ENCODE measurements at regions of chr2 and their contacts with region 1.

Region 1: GRCh38 chr2:238288650-238289573 is 502 bp upstream of the PER2 start:
- DNase-seq: peak; percentile 96 to 99 (median 98)
- ATAC-seq: peak; percentile 93
- H3K4me3 ChIP-seq: peak overlapping the region; percentile 73
- H3K4me3 Mint-ChIP-seq: peak overlapping the region; percentile 84 to 97 (median 93)
- H3K27ac ChIP-seq: peak overlapping the region; percentile 80
- H3K27ac Mint-ChIP-seq: peak overlapping the region; percentile 93 to 98 (median 97)
- H3K4me1 ChIP-seq: peaks cover 16 to 23% of the 10 kb centered on the region in 2 donors
- H3K4me1 Mint-ChIP-seq: peaks cover 26 to 56% (median 40%) of the 10 kb centered on the region in 7 donors
- H3K27me3 ChIP-seq: no peaks in the 10 kb centered on the region
- H3K27me3 Mint-ChIP-seq: peaks cover 0 to 2% (median 0%) of the 10 kb centered on the region in 5 donors

Region 2: DNA sequence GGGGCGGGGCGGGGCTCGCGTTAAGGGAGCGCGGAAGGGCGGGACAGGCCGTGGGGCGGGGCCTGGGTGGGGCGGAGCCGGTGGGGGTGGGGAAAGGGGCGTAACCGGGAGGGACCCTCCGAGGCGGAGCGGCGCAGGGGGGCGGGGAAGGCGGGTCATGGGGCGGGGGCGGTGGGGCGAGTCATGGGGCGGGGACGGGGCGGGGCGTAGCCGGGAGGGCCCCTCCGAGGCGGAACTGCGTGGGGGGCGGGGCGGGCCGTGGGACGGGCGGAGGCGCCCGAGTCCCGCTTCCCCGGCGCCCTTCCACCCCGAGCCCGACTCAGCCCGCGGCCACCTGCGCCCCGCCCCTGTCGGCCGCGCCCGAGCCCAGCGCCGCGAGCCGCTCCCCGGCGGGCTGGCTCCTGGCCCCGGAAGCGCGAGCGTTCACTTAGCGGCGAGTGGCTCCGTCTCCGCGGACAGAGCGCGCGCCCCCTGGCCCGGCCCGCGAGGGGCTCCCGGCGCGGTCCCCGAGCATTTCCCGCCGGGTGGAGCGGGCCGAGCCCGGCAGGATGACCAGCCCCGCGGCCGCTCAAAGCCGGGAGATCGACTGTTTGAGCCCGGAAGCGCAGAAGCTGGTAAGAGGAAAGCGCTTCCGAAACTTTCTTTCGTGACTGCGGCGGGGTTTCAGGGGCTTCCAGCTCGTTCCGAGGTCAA is 596.9 kb before region 1 on chr2:
- CTCF ChIA-PET with region 1: no interaction called
- POLR2A ChIA-PET with region 1: no interaction called
- intact Hi-C with region 1: loop called (anchors 5 kb)
- DNase-seq: peak; percentile 84 to 97 (median 90)
- ATAC-seq: peak; percentile 75
- H3K4me3 ChIP-seq: peak overlapping the region; percentile 82
- H3K4me3 Mint-ChIP-seq: peak overlapping the region; percentile 86 to 98 (median 92)
- H3K27ac ChIP-seq: peak overlapping the region; percentile 97
- H3K27ac Mint-ChIP-seq: peak overlapping the region; percentile 89 to 98 (median 94)
- H3K4me1 ChIP-seq: peaks cover 61 to 63% of the 10 kb centered on the region in 2 donors
- H3K4me1 Mint-ChIP-seq: peaks cover 59 to 86% (median 74%) of the 10 kb centered on the region in 7 donors
- H3K27me3 ChIP-seq: no peaks in the 10 kb centered on the region
- H3K27me3 Mint-ChIP-seq: no peaks in the 10 kb centered on the region

Region 3: GRCh38 chr2:238203094-238203972 is 85.6 kb before region 1 on chr2 and contains the start of gene ILKAP:
- CTCF ChIA-PET with region 1: no interaction called
- POLR2A ChIA-PET with region 1: interaction called, 9 read pairs
- intact Hi-C with region 1: loop called (anchors 1 kb)
- DNase-seq: peak; percentile 87 to 95 (median 92)
- ATAC-seq: peak; percentile 98
- H3K4me3 ChIP-seq: peak within 1 kb of the TSS; percentile 67
- H3K4me3 Mint-ChIP-seq: peak within 1 kb of the TSS; percentile 84 to 94 (median 88)
- H3K27ac ChIP-seq: peak within 1 kb of the TSS; percentile 91
- H3K27ac Mint-ChIP-seq: peak within 1 kb of the TSS; percentile 84 to 95 (median 92)
- H3K4me1 ChIP-seq: peaks cover 20 to 35% of the 10 kb centered on the region in 2 donors
- H3K4me1 Mint-ChIP-seq: peaks cover 28 to 55% (median 43%) of the 10 kb centered on the region in 7 donors
- H3K27me3 ChIP-seq: no peaks in the 10 kb centered on the region
- H3K27me3 Mint-ChIP-seq: peaks cover 0 to 4% (median 0%) of the 10 kb centered on the region in 5 donors
- total RNA-seq, gene ILKAP: 68.1 to 126 (median 90.9) TPM

Region 4: DNA sequence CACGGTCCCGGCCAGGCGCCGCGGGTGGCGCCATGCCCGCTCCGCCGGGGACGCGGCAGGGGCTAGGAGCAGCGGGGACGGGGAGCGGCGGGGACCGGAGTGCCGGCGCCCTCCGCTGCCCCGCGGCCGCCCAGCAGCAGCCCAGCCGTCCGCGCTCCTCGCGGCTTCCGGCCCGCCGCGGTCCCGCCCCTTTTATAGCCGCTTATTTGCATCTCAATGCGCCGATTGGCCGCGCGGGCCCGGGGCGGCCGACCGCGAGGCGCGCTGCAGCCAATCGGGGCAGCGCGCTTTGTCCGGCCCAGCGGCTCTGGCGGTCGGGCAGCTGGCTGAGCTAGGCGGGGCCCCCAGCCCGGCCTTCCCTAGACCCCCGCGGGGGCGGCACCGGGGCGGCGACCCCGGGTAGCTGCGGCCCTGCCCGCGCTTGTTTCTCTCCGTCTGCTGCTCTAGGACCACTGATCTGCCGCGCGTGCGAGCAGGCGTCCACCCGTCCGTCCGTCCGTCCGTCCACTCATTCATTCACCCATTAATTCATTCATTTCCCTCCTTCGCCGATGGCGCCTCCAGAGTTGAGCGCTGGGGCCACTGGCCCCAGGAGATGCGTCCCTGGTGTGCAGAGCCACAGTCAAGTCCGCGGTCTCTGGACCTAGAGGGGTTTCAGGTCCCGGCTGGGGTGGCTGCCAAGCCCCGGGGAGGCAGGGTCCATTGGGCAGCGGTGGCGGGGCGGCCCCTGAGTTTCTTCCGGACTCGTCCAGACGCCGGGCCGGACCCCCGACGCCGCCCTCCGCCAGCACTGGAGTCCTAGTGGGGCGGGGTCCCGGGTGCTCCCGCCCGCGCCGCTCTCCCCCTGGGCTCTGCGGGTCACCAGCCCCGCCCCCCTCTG is 48.8 kb before region 1 on chr2 and contains the start of gene HES6:
- CTCF ChIA-PET with region 1: no interaction called
- POLR2A ChIA-PET with region 1: interaction called, 3 read pairs
- intact Hi-C with region 1: loop called in 1 of 2 experiments (anchors 1 kb)
- DNase-seq: peak; percentile 50 to 84 (median 61)
- ATAC-seq: peak; percentile 90
- H3K4me3 ChIP-seq: peak within 1 kb of the TSS; percentile 59
- H3K4me3 Mint-ChIP-seq: peak within 1 kb of the TSS; percentile 88 to 98 (median 94)
- H3K27ac ChIP-seq: no peak within 1 kb of the TSS
- H3K27ac Mint-ChIP-seq: peak within 1 kb of the TSS in 6 of 9 donors; percentile 28 to 86 (median 80)
- H3K4me1 ChIP-seq: peaks cover 0 to 4% of the 10 kb centered on the region in 2 donors
- H3K4me1 Mint-ChIP-seq: peaks cover 2 to 17% (median 8%) of the 10 kb centered on the region in 7 donors
- H3K27me3 ChIP-seq: peaks cover 0 to 16% of the 10 kb centered on the region in 2 donors
- H3K27me3 Mint-ChIP-seq: peaks cover 11 to 49% (median 13%) of the 10 kb centered on the region in 5 donors
- total RNA-seq, gene HES6: 0.73 to 2.7 (median 2.4) TPM

Region 5: GRCh38 chr2:238305092-238305862 is 16.4 kb after region 1 on chr2:
- CTCF ChIA-PET with region 1: no interaction called
- POLR2A ChIA-PET with region 1: no interaction called
- intact Hi-C with region 1: no loop called
- DNase-seq: no peak
- ATAC-seq: no peak
- H3K4me3 ChIP-seq: no peak overlapping the region
- H3K4me3 Mint-ChIP-seq: no peak overlapping the region
- H3K27ac ChIP-seq: no peak overlapping the region
- H3K27ac Mint-ChIP-seq: no peak overlapping the region
- H3K4me1 ChIP-seq: no peaks in the 10 kb centered on the region
- H3K4me1 Mint-ChIP-seq: no peaks in the 10 kb centered on the region
- H3K27me3 ChIP-seq: no peaks in the 10 kb centered on the region
- H3K27me3 Mint-ChIP-seq: peaks cover 0 to 11% (median under 1%) of the 10 kb centered on the region in 5 donors

Region 6: GRCh38 chr2:238389926-238390597 is 101.2 kb after region 1 on chr2:
- CTCF ChIA-PET with region 1: no interaction called
- POLR2A ChIA-PET with region 1: no interaction called
- intact Hi-C with region 1: no loop called
- DNase-seq: no peak
- ATAC-seq: no peak
- H3K4me3 ChIP-seq: no peak overlapping the region
- H3K4me3 Mint-ChIP-seq: no peak overlapping the region
- H3K27ac ChIP-seq: no peak overlapping the region
- H3K27ac Mint-ChIP-seq: no peak overlapping the region
- H3K4me1 ChIP-seq: no peaks in the 10 kb centered on the region
- H3K4me1 Mint-ChIP-seq: peaks cover 0 to 6% (median 0%) of the 10 kb centered on the region in 7 donors
- H3K27me3 ChIP-seq: no peaks in the 10 kb centered on the region
- H3K27me3 Mint-ChIP-seq: no peaks in the 10 kb centered on the region

Region 7: GRCh38 chr2:238426568-238427434 is 137.9 kb after region 1 on chr2 and contains the start of gene ASB1:
- CTCF ChIA-PET with region 1: no interaction called
- POLR2A ChIA-PET with region 1: no interaction called
- intact Hi-C with region 1: loop called (anchors 1 kb)
- DNase-seq: peak; percentile 62 to 89 (median 72)
- ATAC-seq: peak; percentile 87
- H3K4me3 ChIP-seq: peak within 1 kb of the TSS; percentile 90
- H3K4me3 Mint-ChIP-seq: peak within 1 kb of the TSS; percentile 90 to 97 (median 92)
- H3K27ac ChIP-seq: peak within 1 kb of the TSS; percentile 80
- H3K27ac Mint-ChIP-seq: peak within 1 kb of the TSS; percentile 87 to 95 (median 93)
- H3K4me1 ChIP-seq: peaks cover 3 to 15% of the 10 kb centered on the region in 2 donors
- H3K4me1 Mint-ChIP-seq: peaks cover 28 to 53% (median 49%) of the 10 kb centered on the region in 7 donors
- H3K27me3 ChIP-seq: no peaks in the 10 kb centered on the region
- H3K27me3 Mint-ChIP-seq: no peaks in the 10 kb centered on the region
- total RNA-seq, gene ASB1: 25.0 to 55.2 (median 33.1) TPM

Measured in naive thymus-derived CD4-positive, alpha-beta T cell (primary cell).